ENCODE measurements at regions of chr20 and their contacts with region 1.

Region 1: DNA sequence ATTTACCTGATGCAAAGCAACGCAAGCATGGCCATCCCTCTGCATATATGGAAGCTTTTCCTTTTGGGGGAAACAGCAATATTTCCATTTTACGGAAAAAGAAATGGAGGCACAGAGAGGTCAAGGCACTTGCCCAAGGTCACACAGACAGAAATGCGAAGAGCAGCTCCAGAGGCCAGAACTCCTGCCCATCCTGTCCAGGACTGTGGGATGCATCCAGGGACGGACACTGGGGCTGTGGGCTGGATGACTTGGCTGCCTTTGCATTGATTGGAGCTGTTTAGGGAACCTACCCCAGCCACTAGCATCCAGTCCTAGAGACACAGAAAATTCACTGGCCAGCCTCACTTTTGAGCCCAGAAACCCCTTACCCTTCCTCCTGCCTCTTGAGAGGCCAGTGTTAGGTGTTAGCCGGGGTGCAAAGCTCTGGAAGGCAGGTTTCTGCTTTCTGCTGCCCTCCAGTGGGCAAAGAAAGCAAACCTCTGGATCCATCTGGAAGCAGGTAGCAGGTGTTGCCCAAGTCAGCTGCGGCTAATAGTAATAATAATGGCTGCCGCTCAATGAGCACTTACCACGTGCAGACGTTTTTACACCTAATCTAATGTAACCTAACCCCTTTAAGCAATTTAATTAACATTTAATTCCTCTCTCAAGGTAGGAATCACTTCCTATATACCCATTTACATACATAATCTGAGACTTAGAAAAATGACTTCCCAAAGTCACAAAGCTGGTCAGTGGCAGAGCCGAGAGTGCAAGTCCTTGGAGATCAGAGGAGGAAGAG is 31.7 kb upstream of the CCN5 start:
- DNase-seq: no peak
- ATAC-seq: peak in 3 of 4 donors; percentile 50 to 70 (median 59)
- H3K4me3 ChIP-seq: no peak overlapping the region
- H3K27ac ChIP-seq: no peak overlapping the region
- H3K4me1 ChIP-seq: peaks cover 0 to 12% (median 0%) of the 10 kb centered on the region in 12 donors
- H3K27me3 ChIP-seq: no peaks in the 10 kb centered on the region
- CTCF ChIP-seq: peak in 11 of 12 donors; percentile 35 to 77 (median 57)
- POLR2A ChIP-seq: no peak

Region 2: GRCh38 chr20:44398303-44398702 is 285.2 kb before region 1 on chr20:
- intact Hi-C with region 1: loop called in 1 of 10 experiments (anchors 5 kb)
- DNase-seq: no peak
- ATAC-seq: no peak
- H3K4me3 ChIP-seq: no peak overlapping the region
- H3K27ac ChIP-seq: no peak overlapping the region
- H3K4me1 ChIP-seq: no peaks in the 10 kb centered on the region
- H3K27me3 ChIP-seq: peaks cover 0 to 10% (median 0%) of the 10 kb centered on the region in 9 donors
- CTCF ChIP-seq: no peak
- POLR2A ChIP-seq: no peak

Region 3: DNA sequence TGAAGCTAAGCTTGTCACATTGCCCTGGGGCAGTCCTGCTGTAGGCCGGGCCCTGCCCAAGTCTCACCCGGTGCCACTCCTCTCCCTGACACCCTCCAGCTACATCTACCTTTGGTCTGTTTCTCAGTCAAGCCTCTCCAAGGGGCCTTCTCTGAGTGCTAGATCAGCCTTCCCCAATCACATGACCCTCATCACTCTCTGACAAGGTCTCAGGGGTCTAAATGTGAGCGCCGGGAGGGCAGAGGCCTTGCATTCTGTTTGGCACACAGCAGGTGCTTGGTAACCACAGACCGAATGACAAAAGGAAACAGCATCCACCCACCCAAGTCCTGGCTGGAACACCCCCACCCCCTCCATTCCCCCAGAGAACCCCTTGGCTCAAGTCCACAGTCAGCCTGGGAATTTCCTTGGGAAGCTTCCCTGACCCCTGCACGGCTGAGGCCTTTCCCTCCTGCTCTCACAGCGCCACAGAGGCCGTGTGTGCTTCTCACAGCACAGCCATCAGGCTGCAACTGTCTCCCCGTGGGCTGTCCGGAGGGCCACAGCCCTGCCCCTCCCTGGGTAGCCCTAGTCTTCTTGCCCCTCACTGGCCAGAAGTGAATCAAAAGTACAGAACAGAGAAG is 68.2 kb before region 1 on chr20:
- intact Hi-C with region 1: loop called in 4 of 10 experiments (anchors 1 to 10 kb)
- DNase-seq: peak in 4 of 5 donors; percentile 53 to 67 (median 66)
- ATAC-seq: peak; percentile 4 to 58 (median 28)
- H3K4me3 ChIP-seq: no peak overlapping the region
- H3K27ac ChIP-seq: peak overlapping the region; percentile 55 to 86 (median 74)
- H3K4me1 ChIP-seq: peaks cover 13 to 82% (median 51%) of the 10 kb centered on the region in 12 donors
- H3K27me3 ChIP-seq: no peaks in the 10 kb centered on the region
- CTCF ChIP-seq: peak in 1 of 12 donors; percentile 11
- POLR2A ChIP-seq: no peak

Region 4: GRCh38 chr20:44733341-44734069 is 50.0 kb after region 1 on chr20:
- intact Hi-C with region 1: loop called (anchors 1 to 2 kb)
- DNase-seq: peak in 4 of 5 donors; percentile 56 to 69 (median 64)
- ATAC-seq: peak; percentile 39 to 59 (median 48)
- H3K4me3 ChIP-seq: no peak overlapping the region
- H3K27ac ChIP-seq: no peak overlapping the region
- H3K4me1 ChIP-seq: peaks cover 0 to 37% (median 11%) of the 10 kb centered on the region in 12 donors
- H3K27me3 ChIP-seq: no peaks in the 10 kb centered on the region
- CTCF ChIP-seq: peak; percentile 81 to 97 (median 92)
- POLR2A ChIP-seq: no peak

Region 5: GRCh38 chr20:44861531-44862006 is 178.1 kb after region 1 on chr20:
- intact Hi-C with region 1: loop called in 9 of 10 experiments (anchors 2 to 10 kb)
- DNase-seq: peak in 2 of 5 donors; percentile 32 to 48
- ATAC-seq: peak; percentile 42 to 91 (median 70)
- H3K4me3 ChIP-seq: no peak overlapping the region
- H3K27ac ChIP-seq: no peak overlapping the region
- H3K4me1 ChIP-seq: peaks cover 0 to 27% (median 6%) of the 10 kb centered on the region in 12 donors
- H3K27me3 ChIP-seq: no peaks in the 10 kb centered on the region
- CTCF ChIP-seq: no peak
- POLR2A ChIP-seq: no peak

Region 6: GRCh38 chr20:44866703-44867335 is 183.4 kb after region 1 on chr20:
- intact Hi-C with region 1: loop called (anchors 2 to 10 kb)
- DNase-seq: no peak
- ATAC-seq: no peak
- H3K4me3 ChIP-seq: peak overlapping the region in 1 of 12 donors; percentile 32
- H3K27ac ChIP-seq: no peak overlapping the region
- H3K4me1 ChIP-seq: peaks cover 0 to 28% (median 9%) of the 10 kb centered on the region in 12 donors
- H3K27me3 ChIP-seq: peaks cover 0 to 5% (median 0%) of the 10 kb centered on the region in 9 donors
- CTCF ChIP-seq: no peak
- POLR2A ChIP-seq: no peak